Mammary epithelial cell (primary cell): ENCODE measurements at regions of chr4 and their contacts with region 1.

Region 1: GRCh38 chr4:107863850-107864371 is 39.2 kb downstream of the SGMS2 start:
- DNase-seq: peak; percentile 81
- H3K4me3 ChIP-seq: no peak overlapping the region
- H3K27ac ChIP-seq: peak overlapping the region; percentile 96
- H3K4me1 ChIP-seq: peaks cover 30% of the 10 kb centered on the region
- H3K27me3 ChIP-seq: no peaks in the 10 kb centered on the region
- CTCF ChIP-seq: no peak

Region 2: DNA sequence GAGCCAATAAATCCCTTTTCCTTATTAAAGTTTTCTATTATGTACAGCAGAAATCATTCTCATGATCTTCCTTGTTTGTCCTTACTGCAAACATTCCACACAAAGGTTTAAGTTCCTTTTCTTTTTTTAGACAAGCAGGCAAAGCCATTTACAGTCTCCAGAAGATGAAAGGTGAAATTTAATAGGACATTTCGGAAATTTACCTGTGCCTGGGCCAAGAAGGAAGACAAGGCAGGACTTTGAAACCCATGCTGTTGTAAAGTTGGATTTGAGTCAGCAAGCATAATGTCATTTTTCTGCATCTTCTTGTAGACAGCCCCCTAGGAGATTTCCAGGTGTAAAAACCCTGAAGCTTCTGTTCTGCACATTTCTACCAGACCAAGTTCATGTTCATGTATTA is 332.0 kb before region 1 on chr4:
- CTCF ChIA-PET with region 1: no interaction called
- dilution Hi-C with region 1: no loop called
- in situ Hi-C with region 1: no loop called
- intact Hi-C with region 1: no loop called
- DNase-seq: no peak
- H3K4me3 ChIP-seq: no peak overlapping the region
- H3K27ac ChIP-seq: no peak overlapping the region
- H3K4me1 ChIP-seq: no peaks in the 10 kb centered on the region
- H3K27me3 ChIP-seq: peaks cover 2% of the 10 kb centered on the region
- CTCF ChIP-seq: no peak

Region 3: GRCh38 chr4:107666134-107666533 is 197.8 kb before region 1 on chr4:
- CTCF ChIA-PET with region 1: no interaction called
- dilution Hi-C with region 1: no loop called
- in situ Hi-C with region 1: no loop called
- intact Hi-C with region 1: no loop called
- DNase-seq: no peak
- H3K4me3 ChIP-seq: no peak overlapping the region
- H3K27ac ChIP-seq: no peak overlapping the region
- H3K4me1 ChIP-seq: no peaks in the 10 kb centered on the region
- H3K27me3 ChIP-seq: no peaks in the 10 kb centered on the region
- CTCF ChIP-seq: peak in 1 of 2 donors; percentile 8

Region 4: DNA sequence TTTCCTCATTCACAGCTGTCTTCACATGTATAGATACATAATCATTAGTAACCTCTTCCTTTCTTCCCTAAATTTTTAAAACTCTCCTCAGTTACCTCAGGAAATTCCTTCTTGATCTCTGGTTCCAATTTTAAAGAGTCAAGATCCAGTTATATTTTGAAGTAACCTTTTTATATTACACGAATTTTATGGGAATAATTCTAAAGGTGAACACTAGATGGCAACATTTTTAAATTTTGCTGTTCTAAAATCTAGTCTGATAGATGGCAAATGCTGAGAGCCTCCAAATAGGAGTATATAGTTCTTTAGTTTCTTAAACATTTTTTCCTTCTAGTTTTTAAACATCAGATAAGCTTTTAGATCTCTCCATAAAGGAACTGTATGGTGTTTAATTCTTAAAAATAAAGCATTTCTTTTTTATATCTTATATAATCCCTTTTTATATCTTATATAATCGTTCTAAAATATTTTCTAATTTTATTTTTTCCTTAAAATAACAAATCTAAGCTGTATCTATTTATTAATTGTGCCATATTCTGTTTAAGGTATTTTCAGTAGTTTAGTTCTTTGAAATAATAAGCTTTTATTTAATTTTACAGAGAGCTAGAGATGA is 105.9 kb before region 1 on chr4:
- CTCF ChIA-PET with region 1: no interaction called
- dilution Hi-C with region 1: no loop called
- in situ Hi-C with region 1: no loop called
- intact Hi-C with region 1: loop called (anchors 1 kb)
- DNase-seq: no peak
- H3K4me3 ChIP-seq: no peak overlapping the region
- H3K27ac ChIP-seq: no peak overlapping the region
- H3K4me1 ChIP-seq: no peaks in the 10 kb centered on the region
- H3K27me3 ChIP-seq: no peaks in the 10 kb centered on the region
- CTCF ChIP-seq: peak; percentile 45

Region 5: GRCh38 chr4:107896158-107897045 is 32.5 kb after region 1 on chr4:
- CTCF ChIA-PET with region 1: no interaction called
- dilution Hi-C with region 1: no loop called
- in situ Hi-C with region 1: no loop called
- intact Hi-C with region 1: loop called (anchors 1 kb)
- DNase-seq: peak; percentile 98
- H3K4me3 ChIP-seq: peak overlapping the region; percentile 5 to 36 (median 27)
- H3K27ac ChIP-seq: peak overlapping the region; percentile 97
- H3K4me1 ChIP-seq: peaks cover 57% of the 10 kb centered on the region
- H3K27me3 ChIP-seq: no peaks in the 10 kb centered on the region
- CTCF ChIP-seq: no peak